ENCODE measurements at regions of chr18 and their contacts with region 1.

Region 1: GRCh38 chr18:62714671-62715435 is 488 bp upstream of the PHLPP1 start:
- DNase-seq: peak; percentile 85
- H3K4me3 Mint-ChIP-seq: peak overlapping the region; percentile 87
- H3K27ac Mint-ChIP-seq: peak overlapping the region; percentile 85
- H3K4me1 Mint-ChIP-seq: peaks cover 35% of the 10 kb centered on the region
- H3K27me3 Mint-ChIP-seq: peaks cover 21% of the 10 kb centered on the region

Region 2: GRCh38 chr18:61616111-61616610 is 1098.7 kb before region 1 on chr18:
- intact Hi-C with region 1: no loop called
- DNase-seq: no peak
- H3K4me3 Mint-ChIP-seq: no peak overlapping the region
- H3K27ac Mint-ChIP-seq: no peak overlapping the region
- H3K4me1 Mint-ChIP-seq: no peaks in the 10 kb centered on the region
- H3K27me3 Mint-ChIP-seq: peaks cover 9% of the 10 kb centered on the region

Region 3: DNA sequence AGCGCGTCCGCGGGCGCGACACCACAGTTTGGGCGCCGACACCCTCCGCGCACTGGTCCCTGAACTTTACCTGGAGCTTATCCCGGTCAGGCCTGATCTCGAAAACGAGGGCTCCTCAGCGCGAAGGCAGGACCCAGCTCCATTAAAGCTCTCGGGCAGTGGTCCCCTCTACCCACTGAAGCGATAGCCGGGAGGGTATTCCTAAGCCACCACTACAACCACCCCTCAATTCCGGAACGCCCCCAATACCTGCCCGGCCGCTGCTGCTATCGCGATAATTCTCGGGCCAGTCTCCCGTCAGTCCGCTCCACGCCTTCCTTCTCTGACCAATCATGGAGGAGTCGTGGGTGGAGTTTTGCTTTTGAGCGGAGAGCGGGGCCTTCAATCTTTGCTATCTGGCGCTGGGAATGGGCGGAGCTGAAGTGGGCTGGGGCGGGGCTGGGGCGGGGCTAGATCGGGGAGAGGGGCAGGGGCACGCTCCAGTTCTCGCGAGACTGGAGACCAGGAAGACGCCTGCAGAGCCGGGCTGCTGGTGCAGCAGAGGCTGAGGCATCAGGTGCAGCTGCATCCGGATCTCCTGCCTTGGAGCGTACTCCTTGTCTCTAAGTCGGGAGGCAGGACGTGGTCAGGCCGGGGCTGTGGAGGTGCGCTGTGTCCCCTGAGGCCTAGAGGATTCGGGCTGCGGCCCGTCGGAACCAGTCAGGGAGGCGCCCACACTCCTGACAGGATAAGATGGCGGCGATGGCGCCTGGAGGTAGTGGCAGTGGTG is 527.9 kb before region 1 on chr18 and contains the starts of genes PIGN and RELCH:
- intact Hi-C with region 1: loop called (anchors 1 kb)
- DNase-seq: peak; percentile 93
- H3K4me3 Mint-ChIP-seq: peak within 1 kb of the TSS; percentile 99
- H3K27ac Mint-ChIP-seq: peak within 1 kb of the TSS; percentile 96
- H3K4me1 Mint-ChIP-seq: peaks cover 68% of the 10 kb centered on the region
- H3K27me3 Mint-ChIP-seq: no peaks in the 10 kb centered on the region
- total RNA-seq, gene PIGN: 28.5 and 36.1 TPM in 2 replicates
- total RNA-seq, gene RELCH: 32.6 and 34.5 TPM in 2 replicates

Region 4: GRCh38 chr18:62522504-62523254 is 192.2 kb before region 1 on chr18 and contains the start of gene ZCCHC2:
- intact Hi-C with region 1: loop called (anchors 1 kb)
- DNase-seq: peak; percentile 99
- H3K4me3 Mint-ChIP-seq: peak within 1 kb of the TSS; percentile 98
- H3K27ac Mint-ChIP-seq: peak within 1 kb of the TSS; percentile 94
- H3K4me1 Mint-ChIP-seq: peaks cover 35% of the 10 kb centered on the region
- H3K27me3 Mint-ChIP-seq: peaks cover 4% of the 10 kb centered on the region
- total RNA-seq, gene ZCCHC2: 55.7 and 58.8 TPM in 2 replicates

Region 5: GRCh38 chr18:62784966-62785413 is 70.1 kb after region 1 on chr18:
- intact Hi-C with region 1: loop called (anchors 1 kb)
- DNase-seq: no peak
- H3K4me3 Mint-ChIP-seq: no peak overlapping the region
- H3K27ac Mint-ChIP-seq: no peak overlapping the region
- H3K4me1 Mint-ChIP-seq: peaks cover 36% of the 10 kb centered on the region
- H3K27me3 Mint-ChIP-seq: no peaks in the 10 kb centered on the region

Region 6: DNA sequence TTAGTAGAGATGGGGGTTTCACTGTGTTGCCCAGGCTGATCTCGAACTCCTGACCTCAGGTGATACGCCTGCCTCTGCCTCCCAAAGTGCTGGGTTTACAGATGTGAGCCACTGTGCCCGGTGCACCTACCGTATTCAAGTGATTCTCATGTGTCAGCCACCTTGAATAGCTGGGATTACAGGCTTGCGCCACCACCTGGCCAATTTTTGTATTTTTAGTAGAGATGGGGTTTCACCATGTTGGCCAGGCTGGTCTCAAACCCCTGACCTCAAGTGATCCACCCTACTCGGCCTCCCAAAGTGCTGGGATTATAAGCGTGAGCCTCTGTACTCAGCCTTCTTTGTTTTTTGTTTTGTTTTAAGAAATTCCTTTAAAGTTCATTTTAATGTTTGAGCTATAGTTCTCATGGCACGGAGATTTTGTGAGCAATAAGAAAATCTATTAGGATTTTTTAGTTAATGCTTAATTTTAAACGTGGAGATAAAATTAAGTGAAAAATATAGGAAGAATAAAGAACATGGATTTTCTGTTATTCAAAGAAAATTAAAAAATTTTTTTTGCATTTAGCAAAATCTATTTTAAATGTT is 243.1 kb after region 1 on chr18:
- intact Hi-C with region 1: loop called (anchors 1 kb)
- DNase-seq: peak; percentile 43
- H3K4me3 Mint-ChIP-seq: no peak overlapping the region
- H3K27ac Mint-ChIP-seq: no peak overlapping the region
- H3K4me1 Mint-ChIP-seq: peaks cover 16% of the 10 kb centered on the region
- H3K27me3 Mint-ChIP-seq: no peaks in the 10 kb centered on the region

Region 7: GRCh38 chr18:63320046-63320689 is 605.3 kb after region 1 on chr18:
- intact Hi-C with region 1: loop called (anchors 5 kb)
- DNase-seq: peak; percentile 83
- H3K4me3 Mint-ChIP-seq: peak overlapping the region; percentile 90
- H3K27ac Mint-ChIP-seq: peak overlapping the region; percentile 94
- H3K4me1 Mint-ChIP-seq: peaks cover 42% of the 10 kb centered on the region
- H3K27me3 Mint-ChIP-seq: no peaks in the 10 kb centered on the region

Region 8: DNA sequence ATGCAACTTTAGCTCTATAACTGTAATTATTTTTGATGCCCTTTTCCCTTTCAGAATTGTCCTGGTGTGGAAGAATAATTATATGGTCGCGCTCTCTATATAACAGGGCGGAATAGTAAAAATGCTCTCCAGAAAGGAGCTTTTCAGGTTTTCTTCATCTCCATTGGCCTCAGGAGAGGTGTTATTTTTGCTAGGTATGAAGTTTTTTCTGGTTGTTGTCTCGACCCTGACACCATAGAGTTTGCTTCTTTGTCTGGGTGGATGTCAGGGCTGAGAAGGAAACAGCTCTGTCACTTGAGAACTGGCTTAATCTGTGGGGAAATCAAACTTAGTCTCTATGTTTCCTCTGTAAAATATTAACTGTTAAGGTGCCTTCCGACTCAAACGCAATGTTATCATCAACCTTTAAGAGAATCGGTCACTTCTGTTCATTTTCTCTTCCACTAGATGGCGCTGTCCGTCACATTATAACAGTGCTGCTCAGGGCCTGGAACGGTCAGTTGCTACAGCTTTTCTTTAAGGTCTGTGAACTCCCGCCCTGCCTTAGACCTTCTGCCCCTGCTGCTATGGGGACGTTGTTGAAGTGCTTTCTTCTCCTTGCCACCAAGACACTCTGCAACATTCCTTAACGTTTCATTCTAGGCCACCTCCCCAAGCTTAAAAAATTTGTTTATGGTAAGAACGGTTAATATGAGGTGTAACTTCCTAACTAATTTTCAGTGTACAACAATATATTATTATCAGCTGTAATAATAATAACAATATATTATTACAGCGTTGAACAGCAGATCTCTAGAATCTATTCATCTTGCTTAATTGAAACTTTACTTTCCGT is 803.5 kb after region 1 on chr18:
- intact Hi-C with region 1: no loop called
- DNase-seq: peak; percentile 46
- H3K4me3 Mint-ChIP-seq: no peak overlapping the region
- H3K27ac Mint-ChIP-seq: no peak overlapping the region
- H3K4me1 Mint-ChIP-seq: no peaks in the 10 kb centered on the region
- H3K27me3 Mint-ChIP-seq: peaks cover 14% of the 10 kb centered on the region

Region 9: GRCh38 chr18:63949068-63949737 is 1234.3 kb after region 1 on chr18 and contains the start of gene HMSD:
- intact Hi-C with region 1: loop called (anchors 5 kb)
- DNase-seq: peak; percentile 68
- H3K4me3 Mint-ChIP-seq: peak within 1 kb of the TSS; percentile 88
- H3K27ac Mint-ChIP-seq: peak within 1 kb of the TSS; percentile 87
- H3K4me1 Mint-ChIP-seq: peaks cover 46% of the 10 kb centered on the region
- H3K27me3 Mint-ChIP-seq: peaks cover 5% of the 10 kb centered on the region
- total RNA-seq, gene HMSD: 19.7 and 27.8 TPM in 2 replicates

Measured in activated T-helper 1 cell treated with anti-CD3 and anti-CD28 coated beads, Interleukin-12 subunit alpha, Interleukin-12 subunit beta, Interleukin-2, Interleukin-4 antibody, amounts not matched to agents 30 ng/mL and 10 ng/mL and 1 ng/mL, durations not matched to agents 14 hours and 24 hours and 36 hours (primary cell).